Posterior vena cava (tissue), 2 donors: ENCODE measurements at regions of chr9 and their contacts with region 1.

Region 1: DNA sequence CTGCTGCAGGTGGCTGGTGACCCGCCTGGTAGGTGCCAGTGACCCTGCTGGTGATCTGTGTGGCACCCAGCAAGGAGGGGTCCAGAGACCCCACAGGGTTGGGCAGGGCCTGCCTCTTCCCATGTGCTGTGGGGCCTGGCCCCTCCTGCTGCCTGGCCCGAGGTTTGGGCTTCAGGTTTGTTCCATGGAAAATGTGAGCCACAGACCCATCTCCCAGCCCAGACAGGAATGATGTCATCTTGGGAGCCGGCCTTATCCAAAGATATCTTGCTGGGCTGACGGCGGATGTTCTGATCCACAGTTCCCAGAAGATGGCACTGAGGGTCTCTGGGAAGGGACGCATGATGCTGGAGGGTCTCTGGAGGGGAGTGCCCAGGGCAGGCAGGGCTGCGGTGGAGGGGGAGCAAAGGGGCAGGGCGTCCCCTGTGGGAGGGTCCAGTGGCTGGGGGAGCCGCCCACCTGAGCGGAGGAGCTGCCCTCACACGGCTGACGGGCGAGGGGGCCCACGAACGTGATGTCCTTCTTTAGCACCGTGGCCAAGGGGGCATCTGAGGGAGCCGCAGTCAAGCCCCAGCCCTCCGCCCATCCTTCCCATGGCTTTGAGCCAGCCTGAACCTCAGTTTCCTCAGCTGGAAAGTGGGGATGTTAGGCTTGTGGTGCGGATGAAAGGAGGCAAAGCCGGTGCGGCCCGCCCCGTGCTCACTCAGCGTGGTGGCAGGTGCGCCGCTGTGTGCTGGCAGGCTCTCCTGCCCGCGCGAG is 68.1 kb downstream of the COL5A1 start:
- DNase-seq: peak; percentile 91

Region 2: GRCh38 chr9:134730011-134730760 is 20.5 kb after region 1 on chr9:
- intact Hi-C with region 1: loop called (anchors 2 to 5 kb)
- DNase-seq: no peak

Region 3: DNA sequence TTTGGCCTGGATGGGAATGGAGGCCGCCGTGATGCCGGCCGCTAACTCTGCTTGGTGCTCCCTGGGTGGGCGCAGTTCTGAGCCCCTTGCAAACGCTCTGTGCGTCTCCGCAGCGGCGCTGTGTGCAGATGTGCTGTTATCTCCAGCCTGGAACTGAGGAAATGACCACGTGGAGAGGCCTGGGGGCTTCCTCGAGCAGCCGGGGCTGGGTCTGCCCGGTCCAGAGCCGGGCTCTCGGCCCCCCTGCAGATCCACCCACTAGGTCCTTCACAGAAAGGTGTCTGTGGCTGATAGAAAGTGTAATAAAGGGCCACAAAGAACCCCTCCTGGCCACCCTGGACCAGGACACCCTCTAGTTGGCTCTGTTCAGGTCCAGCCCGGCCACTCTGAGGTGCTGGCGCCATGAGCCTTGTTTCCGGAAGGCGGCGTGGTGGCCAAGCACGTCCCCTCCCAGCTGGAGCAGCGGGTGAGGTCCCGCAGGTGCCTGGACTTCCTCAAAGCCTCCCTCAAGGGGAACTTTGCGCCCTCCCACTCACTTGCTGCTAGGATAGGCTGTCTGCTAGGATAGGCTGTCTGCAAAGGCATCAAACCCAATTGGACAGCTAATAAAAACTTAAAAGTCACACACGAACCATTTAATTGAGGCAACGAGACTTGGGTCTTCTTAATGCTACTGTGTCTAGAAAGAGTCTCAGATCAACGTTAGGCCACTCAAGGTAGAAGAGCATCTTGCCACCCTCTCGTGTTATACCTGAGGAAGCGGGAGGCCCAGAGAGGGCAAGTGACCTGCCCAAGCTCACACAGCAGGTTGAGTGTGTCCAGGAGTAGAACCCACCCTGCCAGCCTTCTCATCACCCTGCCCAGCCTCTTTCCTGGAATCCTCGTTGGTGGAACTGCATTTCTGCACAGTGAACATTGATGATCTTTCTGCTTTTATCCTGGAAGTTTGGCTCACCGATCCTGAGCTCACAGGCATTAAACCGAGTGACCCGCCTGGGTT is 61.6 kb after region 1 on chr9:
- intact Hi-C with region 1: loop called in 1 of 2 experiments (anchors 2 kb)
- DNase-seq: no peak

Region 4: GRCh38 chr9:134785325-134786108 is 75.8 kb after region 1 on chr9:
- intact Hi-C with region 1: no loop called
- DNase-seq: peak; percentile 88